Activated CD8-positive, alpha-beta T cell treated with anti-CD3 and anti-CD28 coated beads for 36 hours (primary cell): ENCODE measurements at regions of chr2 and their contacts with region 1.

Region 1: DNA sequence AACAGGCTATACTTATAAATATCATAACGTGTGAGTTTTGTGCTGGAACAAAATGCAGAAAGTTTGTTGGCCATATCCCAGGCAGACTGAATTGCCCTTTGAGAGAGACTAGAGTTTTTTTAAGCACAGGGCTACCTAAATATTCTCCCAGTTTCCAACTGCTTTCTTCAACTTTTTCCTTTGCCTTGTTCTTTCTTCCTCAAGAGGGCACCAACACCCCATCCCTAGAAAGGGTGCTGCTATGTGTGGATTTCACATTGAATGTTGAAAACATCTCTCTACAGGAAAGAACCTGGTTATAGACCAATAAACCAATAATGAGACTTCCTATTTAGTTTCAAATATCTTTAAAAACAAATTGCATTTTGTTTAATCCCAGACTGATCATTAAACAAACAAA is 87.9 kb downstream of the ICOS start:
- DNase-seq: peak; percentile 42
- ATAC-seq: no peak
- H3K4me3 Mint-ChIP-seq: no peak overlapping the region
- H3K27ac Mint-ChIP-seq: no peak overlapping the region
- H3K4me1 Mint-ChIP-seq: peaks cover 36% of the 10 kb centered on the region
- H3K27me3 Mint-ChIP-seq: no peaks in the 10 kb centered on the region
- CTCF ChIP-seq: peak; percentile 65

Region 2: GRCh38 chr2:203940039-203940438 is 84.5 kb before region 1 on chr2:
- CTCF ChIA-PET with region 1: interaction called, 6 read pairs
- POLR2A ChIA-PET with region 1: interaction called, 8 read pairs
- intact Hi-C with region 1: loop called (anchors 1 kb)
- DNase-seq: no peak
- ATAC-seq: peak; percentile 3
- H3K4me3 Mint-ChIP-seq: peak overlapping the region; percentile 96
- H3K27ac Mint-ChIP-seq: peak overlapping the region; percentile 95
- H3K4me1 Mint-ChIP-seq: peaks cover 55% of the 10 kb centered on the region
- H3K27me3 Mint-ChIP-seq: no peaks in the 10 kb centered on the region
- CTCF ChIP-seq: no peak

Region 3: GRCh38 chr2:204005940-204006721 is 18.4 kb before region 1 on chr2:
- CTCF ChIA-PET with region 1: interaction called, 3 read pairs
- POLR2A ChIA-PET with region 1: interaction called, 11 read pairs
- intact Hi-C with region 1: no loop called
- DNase-seq: no peak
- ATAC-seq: peak; percentile 68
- H3K4me3 Mint-ChIP-seq: no peak overlapping the region
- H3K27ac Mint-ChIP-seq: peak overlapping the region; percentile 92
- H3K4me1 Mint-ChIP-seq: peaks cover 80% of the 10 kb centered on the region
- H3K27me3 Mint-ChIP-seq: no peaks in the 10 kb centered on the region
- CTCF ChIP-seq: no peak

Region 4: GRCh38 chr2:204051476-204051875 is 27.0 kb after region 1 on chr2:
- CTCF ChIA-PET with region 1: interaction called, 18 read pairs
- POLR2A ChIA-PET with region 1: no interaction called
- intact Hi-C with region 1: no loop called
- DNase-seq: no peak
- ATAC-seq: peak; percentile 50
- H3K4me3 Mint-ChIP-seq: no peak overlapping the region
- H3K27ac Mint-ChIP-seq: no peak overlapping the region
- H3K4me1 Mint-ChIP-seq: peaks cover 16% of the 10 kb centered on the region
- H3K27me3 Mint-ChIP-seq: no peaks in the 10 kb centered on the region
- CTCF ChIP-seq: peak; percentile 44

Region 5: DNA sequence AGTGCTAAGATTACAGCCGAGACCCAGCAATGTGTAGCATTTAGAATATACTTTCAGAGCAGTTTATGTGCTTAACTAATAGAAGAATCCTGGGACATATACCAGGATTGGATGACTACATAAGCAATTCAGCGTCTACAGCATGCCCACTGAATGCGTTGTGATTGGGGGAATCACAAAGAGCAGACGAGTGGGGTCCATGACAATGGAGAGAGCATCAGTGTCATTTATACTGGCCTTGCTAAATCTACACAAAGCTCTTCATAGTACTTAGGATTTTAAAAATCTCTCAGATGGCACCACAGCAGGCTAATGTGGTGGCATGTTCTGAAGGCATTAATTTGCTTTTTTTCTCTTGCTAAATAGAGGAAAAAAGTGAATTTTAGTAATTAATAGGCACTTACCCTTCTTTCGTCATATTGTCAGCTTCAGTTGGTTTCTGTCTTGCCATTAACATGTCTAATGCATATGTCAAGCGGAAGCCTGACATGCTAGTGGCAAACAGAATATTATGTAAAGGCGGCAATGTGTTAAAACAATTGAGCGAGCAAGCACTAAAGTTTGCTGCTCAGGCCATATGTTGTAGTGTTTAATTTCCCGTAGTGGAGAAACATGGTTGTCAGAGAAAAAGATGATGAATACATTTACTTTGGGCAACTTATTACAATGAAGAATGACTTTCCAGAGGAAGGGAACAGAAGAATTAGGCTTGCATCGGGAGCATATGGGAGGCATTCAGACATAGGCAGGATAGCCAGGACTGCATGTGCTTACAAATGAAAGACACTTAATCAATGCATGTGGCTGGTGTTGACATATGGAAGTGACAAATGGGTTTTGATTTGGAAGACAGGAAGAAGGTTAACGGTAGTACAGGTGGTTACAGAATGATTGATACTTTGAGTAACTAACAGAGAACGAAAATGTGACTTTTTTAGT is 57.3 kb after region 1 on chr2:
- CTCF ChIA-PET with region 1: no interaction called
- POLR2A ChIA-PET with region 1: no interaction called
- intact Hi-C with region 1: no loop called
- DNase-seq: no peak
- ATAC-seq: no peak
- H3K4me3 Mint-ChIP-seq: no peak overlapping the region
- H3K27ac Mint-ChIP-seq: no peak overlapping the region
- H3K4me1 Mint-ChIP-seq: peaks cover 2% of the 10 kb centered on the region
- H3K27me3 Mint-ChIP-seq: peaks cover 7% of the 10 kb centered on the region
- CTCF ChIP-seq: no peak

Region 6: DNA sequence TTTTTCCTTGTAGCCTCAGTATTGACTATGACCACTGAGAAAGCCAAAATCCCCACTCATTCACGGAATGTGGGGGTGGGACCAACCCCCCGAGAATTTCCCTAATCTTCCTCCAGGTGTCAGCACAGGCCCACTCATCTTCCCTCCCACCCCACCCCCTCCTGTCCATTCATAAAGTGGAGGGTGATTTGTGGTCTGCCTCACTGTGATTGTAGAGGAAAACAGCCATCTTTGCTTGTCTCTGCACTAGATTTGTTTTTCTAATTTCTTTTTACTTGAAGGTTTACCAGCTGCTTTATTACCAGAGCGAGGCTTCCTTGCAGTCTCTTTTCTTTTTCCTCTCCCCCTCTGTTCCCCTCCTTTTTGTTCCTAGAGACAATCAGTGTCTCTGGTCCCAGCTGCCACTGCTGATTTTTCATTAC is 83.8 kb after region 1 on chr2:
- CTCF ChIA-PET with region 1: interaction called, 4 read pairs
- POLR2A ChIA-PET with region 1: no interaction called
- intact Hi-C with region 1: loop called (anchors 5 kb)
- DNase-seq: peak; percentile 73
- ATAC-seq: peak; percentile 49
- H3K4me3 Mint-ChIP-seq: peak overlapping the region; percentile 62
- H3K27ac Mint-ChIP-seq: peak overlapping the region; percentile 92
- H3K4me1 Mint-ChIP-seq: peaks cover 78% of the 10 kb centered on the region
- H3K27me3 Mint-ChIP-seq: peaks cover 4% of the 10 kb centered on the region
- CTCF ChIP-seq: peak; percentile 89